Esophagus muscularis mucosa (tissue), 4 donors: ENCODE measurements at regions of chr16 and their contacts with region 1.

Region 1: DNA sequence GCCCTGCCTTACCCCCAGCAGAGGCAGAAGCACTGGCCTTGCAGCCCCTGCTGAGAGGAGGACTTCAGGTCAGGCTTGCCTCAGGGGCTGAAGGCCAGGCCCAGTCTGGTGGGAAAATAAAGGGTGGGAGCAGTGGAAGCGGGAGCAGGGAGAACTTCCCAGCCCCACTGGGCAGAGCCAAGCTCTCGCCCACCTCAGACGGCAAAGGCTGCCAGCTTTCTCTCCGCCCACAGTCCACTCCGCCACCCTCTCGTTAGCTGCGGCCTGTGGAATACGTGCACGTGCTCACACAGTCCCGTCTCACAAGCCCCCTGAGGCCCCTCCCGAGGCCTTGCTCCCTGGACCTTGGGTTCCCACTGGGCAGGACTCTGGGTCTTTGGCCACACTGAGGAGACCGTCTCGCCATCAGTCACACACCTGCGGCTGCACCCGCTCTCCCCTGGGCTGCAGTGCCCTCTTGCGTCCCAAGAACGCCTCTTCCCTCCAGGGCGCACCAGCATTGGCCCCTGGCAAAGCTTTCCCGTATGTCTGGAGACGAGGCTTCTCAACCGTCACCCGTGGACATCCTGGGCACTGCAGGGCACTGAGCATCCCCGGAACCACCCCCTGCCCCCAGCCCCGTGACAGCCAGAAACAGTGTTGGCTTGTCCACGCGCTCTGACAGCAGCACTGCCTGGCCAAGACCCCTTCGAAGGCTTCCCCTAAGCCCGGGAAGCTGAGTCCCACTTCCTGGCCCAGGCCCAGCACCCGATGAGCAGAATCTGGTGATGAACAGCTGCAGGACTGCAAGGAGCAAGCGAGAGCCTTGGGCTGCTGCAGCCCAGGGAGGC is 8.3 kb downstream of the MRPL28 start:
- DNase-seq: no peak
- H3K4me3 ChIP-seq: no peak overlapping the region
- H3K27ac ChIP-seq: no peak overlapping the region
- H3K4me1 ChIP-seq: peaks cover 0 to 9% (median 4%) of the 10 kb centered on the region in 4 donors
- H3K27me3 ChIP-seq: peaks cover 0 to 38% (median 0%) of the 10 kb centered on the region in 4 donors
- CTCF ChIP-seq: peak; percentile 52 to 77 (median 68)
- EP300 ChIP-seq: no peak
- POLR2A ChIP-seq: no peak

Region 2: DNA sequence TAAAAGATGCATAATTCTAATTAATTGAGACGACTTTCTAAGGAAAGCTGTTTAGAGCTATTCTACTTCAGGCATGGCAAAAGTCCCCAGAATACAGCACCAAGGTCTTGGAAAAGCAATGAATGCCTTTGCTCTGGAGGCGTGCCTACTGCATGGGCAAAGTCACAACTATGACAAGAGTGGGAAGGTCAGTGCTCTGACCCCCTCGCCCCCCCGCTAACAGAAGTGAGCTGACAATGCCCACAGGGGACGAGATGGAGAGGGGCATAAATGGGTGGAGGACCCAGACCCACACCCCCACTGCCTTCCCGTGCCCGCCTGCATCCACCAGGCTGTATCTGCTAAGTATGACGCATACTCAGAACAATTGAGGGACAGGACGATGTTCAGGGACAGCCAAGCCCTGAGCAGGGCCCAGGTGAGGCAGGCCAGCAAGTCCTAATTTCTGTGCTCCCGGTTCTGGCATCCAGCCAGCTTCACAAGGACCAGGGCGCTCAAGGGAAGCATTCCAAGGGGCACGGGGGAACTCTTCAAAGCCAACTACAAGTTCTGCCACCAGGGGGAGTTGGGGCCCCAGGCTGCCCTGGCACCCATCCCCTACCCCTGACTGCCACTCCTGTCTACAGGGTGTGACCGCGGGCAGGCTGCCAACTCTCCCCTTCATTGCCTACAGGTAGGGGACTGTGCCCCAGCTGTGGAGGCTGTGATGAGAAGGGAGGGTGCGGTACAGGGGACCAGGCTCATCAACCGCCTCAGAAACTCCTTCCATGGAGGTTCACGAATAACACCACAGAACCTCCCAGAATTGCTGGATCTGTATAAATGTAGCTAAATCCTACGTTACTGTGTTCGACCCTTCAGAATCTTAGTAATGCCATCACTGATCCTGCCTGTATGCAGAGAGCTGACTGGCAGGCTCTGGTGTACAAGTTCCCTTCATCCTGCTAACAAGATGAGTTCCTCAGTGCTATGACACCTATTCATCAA is 244.4 kb before region 1 on chr16:
- intact Hi-C with region 1: loop called (anchors 5 kb)
- DNase-seq: no peak
- H3K4me3 ChIP-seq: no peak overlapping the region
- H3K27ac ChIP-seq: no peak overlapping the region
- H3K4me1 ChIP-seq: peaks cover 0 to 10% (median 6%) of the 10 kb centered on the region in 4 donors
- H3K27me3 ChIP-seq: no peaks in the 10 kb centered on the region
- CTCF ChIP-seq: peak; percentile 42 to 61 (median 44)
- EP300 ChIP-seq: no peak
- POLR2A ChIP-seq: no peak